Prostate gland (tissue), 2 donors: ENCODE measurements at regions of chr2 and their contacts with region 1.

Region 1: GRCh38 chr2:127891811-127892210 is 6.1 kb upstream of the AMMECR1L start:
- DNase-seq: no peak
- H3K4me3 ChIP-seq: no peak overlapping the region
- H3K27ac ChIP-seq: no peak overlapping the region
- H3K4me1 ChIP-seq: peaks cover 3% of the 10 kb centered on the region
- H3K27me3 ChIP-seq: no peaks in the 10 kb centered on the region
- CTCF ChIP-seq: no peak
- POLR2A ChIP-seq: no peak

Region 2: GRCh38 chr2:127953128-127953718 is 61.4 kb after region 1 on chr2:
- intact Hi-C with region 1: loop called (anchors 10 kb)
- DNase-seq: no peak
- H3K4me3 ChIP-seq: no peak overlapping the region
- H3K27ac ChIP-seq: no peak overlapping the region
- H3K4me1 ChIP-seq: no peaks in the 10 kb centered on the region
- H3K27me3 ChIP-seq: no peaks in the 10 kb centered on the region
- CTCF ChIP-seq: no peak
- POLR2A ChIP-seq: no peak